ENCODE measurements at regions of chr2 and their contacts with region 1.

Region 1: GRCh38 chr2:216404010-216404618 is 8.2 kb upstream of the SMARCAL1 start:
- DNase-seq: peak in 4 of 5 donors; percentile 11 to 40 (median 36)
- H3K4me3 ChIP-seq: no peak overlapping the region
- H3K4me3 Mint-ChIP-seq: no peak overlapping the region
- H3K27ac ChIP-seq: no peak overlapping the region
- H3K27ac Mint-ChIP-seq: no peak overlapping the region
- H3K4me1 ChIP-seq: no peaks in the 10 kb centered on the region
- H3K4me1 Mint-ChIP-seq: no peaks in the 10 kb centered on the region
- H3K27me3 ChIP-seq: no peaks in the 10 kb centered on the region
- H3K27me3 Mint-ChIP-seq: peaks cover 3 to 5% of the 10 kb centered on the region in 2 donors

Region 2: DNA sequence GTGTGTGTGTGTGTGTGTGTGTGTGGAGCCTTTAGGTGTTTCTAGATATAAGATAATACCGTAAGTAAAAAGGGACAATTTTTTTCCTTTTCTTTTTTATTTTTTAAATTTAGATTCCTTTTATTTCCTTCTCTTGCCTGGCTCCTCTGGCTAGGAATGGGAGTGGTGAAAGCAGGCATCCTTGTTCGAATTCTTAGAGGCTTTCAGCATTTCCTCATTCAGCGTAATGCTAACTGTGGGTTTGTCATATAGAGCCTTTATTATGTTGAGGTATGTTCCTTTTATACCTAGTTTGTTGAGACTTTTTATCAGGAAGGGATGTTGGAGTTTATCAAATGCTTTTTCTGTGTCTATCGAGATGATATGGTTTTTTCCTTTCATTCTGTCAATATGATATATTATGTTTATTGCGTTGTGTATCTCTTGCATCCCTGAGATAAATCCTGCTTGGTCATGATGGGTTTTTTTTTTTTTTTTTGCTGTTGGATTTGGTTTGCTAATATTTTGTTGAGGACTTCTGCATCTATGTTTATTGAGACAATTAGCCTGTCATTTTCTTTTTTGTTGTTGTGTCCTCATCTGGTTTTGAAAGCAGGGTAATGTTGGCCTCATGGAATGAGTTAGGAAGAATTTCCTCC is 174.7 kb before region 1 on chr2:
- CTCF ChIA-PET with region 1: no interaction called
- POLR2A ChIA-PET with region 1: no interaction called
- DNase-seq: no peak
- H3K4me3 ChIP-seq: no peak overlapping the region
- H3K4me3 Mint-ChIP-seq: no peak overlapping the region
- H3K27ac ChIP-seq: no peak overlapping the region
- H3K27ac Mint-ChIP-seq: no peak overlapping the region
- H3K4me1 ChIP-seq: no peaks in the 10 kb centered on the region
- H3K4me1 Mint-ChIP-seq: no peaks in the 10 kb centered on the region
- H3K27me3 ChIP-seq: no peaks in the 10 kb centered on the region
- H3K27me3 Mint-ChIP-seq: no peaks in the 10 kb centered on the region

Region 3: GRCh38 chr2:216350214-216350789 is 53.8 kb before region 1 on chr2:
- CTCF ChIA-PET with region 1: interaction called, 30 read pairs
- POLR2A ChIA-PET with region 1: no interaction called
- DNase-seq: peak in 4 of 5 donors; percentile 15 to 74 (median 39)
- H3K4me3 ChIP-seq: no peak overlapping the region
- H3K4me3 Mint-ChIP-seq: peak overlapping the region; percentile 32 to 65 (median 49)
- H3K27ac ChIP-seq: no peak overlapping the region
- H3K27ac Mint-ChIP-seq: peak overlapping the region; percentile 77 to 93 (median 88)
- H3K4me1 ChIP-seq: peaks cover 73% of the 10 kb centered on the region
- H3K4me1 Mint-ChIP-seq: peaks cover 74 to 84% (median 76%) of the 10 kb centered on the region in 3 donors
- H3K27me3 ChIP-seq: no peaks in the 10 kb centered on the region
- H3K27me3 Mint-ChIP-seq: peaks cover 0 to 2% of the 10 kb centered on the region in 2 donors

Region 4: GRCh38 chr2:216371756-216372702 is 32.1 kb before region 1 on chr2 and contains the start of gene MARCHF4:
- CTCF ChIA-PET with region 1: interaction called, 11 read pairs
- POLR2A ChIA-PET with region 1: no interaction called
- DNase-seq: peak; percentile 48 to 72 (median 64)
- H3K4me3 ChIP-seq: no peak within 1 kb of the TSS
- H3K4me3 Mint-ChIP-seq: peak within 1 kb of the TSS in 6 of 7 donors; percentile 50 to 75 (median 58)
- H3K27ac ChIP-seq: no peak within 1 kb of the TSS
- H3K27ac Mint-ChIP-seq: peak within 1 kb of the TSS in 1 of 8 donors; percentile 14
- H3K4me1 ChIP-seq: peaks cover 8% of the 10 kb centered on the region
- H3K4me1 Mint-ChIP-seq: peaks cover 7 to 20% (median 13%) of the 10 kb centered on the region in 3 donors
- H3K27me3 ChIP-seq: peaks cover 25% of the 10 kb centered on the region
- H3K27me3 Mint-ChIP-seq: peaks cover 44 to 68% of the 10 kb centered on the region in 2 donors
- total RNA-seq, gene MARCHF4: not detected